ENCODE measurements at regions of chrX and their contacts with region 1.

Region 1: DNA sequence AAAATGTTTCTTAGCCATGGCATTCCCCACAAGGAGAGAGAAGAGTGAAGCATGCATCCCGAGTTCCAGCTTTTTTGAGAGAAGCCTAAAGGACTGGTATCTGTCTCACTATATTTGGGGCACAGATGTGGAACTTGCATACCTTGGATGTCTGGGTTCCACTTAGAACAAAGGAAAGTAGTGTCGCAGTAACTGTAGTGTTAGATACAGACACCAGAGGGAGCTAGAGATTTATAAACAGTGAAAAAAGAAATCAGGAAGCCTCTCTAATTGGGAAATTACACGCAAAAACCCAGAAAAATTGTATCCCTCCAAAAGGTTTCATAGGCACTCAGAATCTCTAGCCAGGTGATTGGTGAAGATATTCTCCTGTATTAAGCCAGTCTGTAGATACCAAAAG is 34.4 kb downstream of the AGTR2 start:
- DNase-seq: peak; percentile 11
- H3K4me3 ChIP-seq: no peak overlapping the region
- H3K27ac ChIP-seq: no peak overlapping the region
- H3K4me1 ChIP-seq: no peaks in the 10 kb centered on the region
- H3K27me3 ChIP-seq: peaks cover 4% of the 10 kb centered on the region
- CTCF ChIP-seq: peak; percentile 65 to 78

Region 2: GRCh38 chrX:116111934-116112595 is 92.9 kb before region 1 on chrX:
- CTCF ChIA-PET with region 1: no interaction called
- dilution Hi-C with region 1: no loop called
- in situ Hi-C with region 1: no loop called
- intact Hi-C with region 1: no loop called
- DNase-seq: no peak
- H3K4me3 ChIP-seq: no peak overlapping the region
- H3K27ac ChIP-seq: no peak overlapping the region
- H3K4me1 ChIP-seq: no peaks in the 10 kb centered on the region
- H3K27me3 ChIP-seq: peaks cover 4% of the 10 kb centered on the region
- CTCF ChIP-seq: no peak

Region 3: GRCh38 chrX:116409219-116409618 is 204.3 kb after region 1 on chrX:
- CTCF ChIA-PET with region 1: no interaction called
- dilution Hi-C with region 1: no loop called
- in situ Hi-C with region 1: no loop called
- intact Hi-C with region 1: loop called (anchors 1 kb)
- DNase-seq: no peak
- H3K4me3 ChIP-seq: no peak overlapping the region
- H3K27ac ChIP-seq: no peak overlapping the region
- H3K4me1 ChIP-seq: no peaks in the 10 kb centered on the region
- H3K27me3 ChIP-seq: peaks cover 2% of the 10 kb centered on the region
- CTCF ChIP-seq: no peak

Region 4: DNA sequence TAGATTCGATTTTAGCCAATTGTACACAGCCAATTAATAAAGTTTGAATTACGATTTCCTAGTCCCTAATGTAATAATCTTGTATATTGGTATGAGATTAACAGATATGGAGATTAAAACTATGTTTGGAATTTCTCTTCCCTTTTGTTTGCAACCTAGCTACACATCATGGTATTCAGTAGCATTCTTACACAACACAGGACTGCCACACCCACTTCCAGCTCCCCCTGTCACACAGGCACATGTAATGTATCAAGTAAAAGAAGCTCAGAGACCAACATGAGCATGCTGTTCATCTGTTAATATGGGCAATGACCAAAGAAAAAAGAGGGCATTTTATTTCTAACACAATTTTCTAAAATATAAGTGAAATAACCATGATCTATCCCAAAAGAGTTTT is 244.2 kb after region 1 on chrX:
- CTCF ChIA-PET with region 1: no interaction called
- dilution Hi-C with region 1: no loop called
- in situ Hi-C with region 1: loop called in 1 of 2 experiments (anchors 10 kb)
- intact Hi-C with region 1: loop called (anchors 1 kb)
- DNase-seq: no peak
- H3K4me3 ChIP-seq: no peak overlapping the region
- H3K27ac ChIP-seq: no peak overlapping the region
- H3K4me1 ChIP-seq: no peaks in the 10 kb centered on the region
- H3K27me3 ChIP-seq: peaks cover 2% of the 10 kb centered on the region
- CTCF ChIP-seq: no peak

Region 5: GRCh38 chrX:117743469-117744251 is 1538.7 kb after region 1 on chrX:
- CTCF ChIA-PET with region 1: no interaction called
- dilution Hi-C with region 1: no loop called
- in situ Hi-C with region 1: loop called in 1 of 2 experiments (anchors 25 kb)
- intact Hi-C with region 1: no loop called
- DNase-seq: peak; percentile 14
- H3K4me3 ChIP-seq: no peak overlapping the region
- H3K27ac ChIP-seq: no peak overlapping the region
- H3K4me1 ChIP-seq: no peaks in the 10 kb centered on the region
- H3K27me3 ChIP-seq: no peaks in the 10 kb centered on the region
- CTCF ChIP-seq: peak; percentile 63 to 81

Measured in mammary epithelial cell (primary cell).